ENCODE measurements at regions of chr7 and their contacts with region 1.

Region 1: DNA sequence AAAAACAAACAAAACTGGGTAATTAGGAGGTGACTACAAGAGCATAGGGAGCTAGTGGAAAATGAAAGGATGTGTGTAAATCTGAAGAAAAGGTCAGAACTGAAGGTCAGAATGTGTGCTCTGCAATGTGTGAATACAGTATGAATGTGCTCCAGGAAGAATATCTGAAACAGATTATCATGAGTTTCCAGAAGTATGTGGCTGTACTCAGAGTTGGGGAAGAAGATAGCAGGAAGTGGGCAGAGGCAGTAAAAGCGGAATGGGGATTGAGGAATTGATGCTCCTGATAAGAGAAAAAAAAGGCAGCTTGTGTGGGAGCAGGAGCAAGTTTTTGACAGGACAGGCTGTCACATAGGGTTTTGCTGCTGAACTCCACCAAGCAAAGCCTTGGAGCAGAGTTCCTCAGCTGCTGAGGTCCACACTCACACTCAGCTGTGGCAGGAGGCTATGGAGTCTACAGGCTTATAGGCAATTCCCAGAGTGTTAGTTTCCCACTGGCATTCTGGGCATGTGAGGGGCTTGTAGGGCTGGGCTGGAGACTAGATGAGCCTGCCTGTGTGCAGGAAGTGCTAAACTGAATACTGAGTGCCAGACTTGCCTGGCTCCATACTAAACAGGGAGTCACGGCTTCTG is 22.9 kb downstream of the H2AZ2 start:
- DNase-seq: no peak
- H3K4me3 ChIP-seq: no peak overlapping the region
- H3K27ac ChIP-seq: no peak overlapping the region
- H3K4me1 ChIP-seq: no peaks in the 10 kb centered on the region
- H3K27me3 ChIP-seq: no peaks in the 10 kb centered on the region
- CTCF ChIP-seq: no peak

Region 2: DNA sequence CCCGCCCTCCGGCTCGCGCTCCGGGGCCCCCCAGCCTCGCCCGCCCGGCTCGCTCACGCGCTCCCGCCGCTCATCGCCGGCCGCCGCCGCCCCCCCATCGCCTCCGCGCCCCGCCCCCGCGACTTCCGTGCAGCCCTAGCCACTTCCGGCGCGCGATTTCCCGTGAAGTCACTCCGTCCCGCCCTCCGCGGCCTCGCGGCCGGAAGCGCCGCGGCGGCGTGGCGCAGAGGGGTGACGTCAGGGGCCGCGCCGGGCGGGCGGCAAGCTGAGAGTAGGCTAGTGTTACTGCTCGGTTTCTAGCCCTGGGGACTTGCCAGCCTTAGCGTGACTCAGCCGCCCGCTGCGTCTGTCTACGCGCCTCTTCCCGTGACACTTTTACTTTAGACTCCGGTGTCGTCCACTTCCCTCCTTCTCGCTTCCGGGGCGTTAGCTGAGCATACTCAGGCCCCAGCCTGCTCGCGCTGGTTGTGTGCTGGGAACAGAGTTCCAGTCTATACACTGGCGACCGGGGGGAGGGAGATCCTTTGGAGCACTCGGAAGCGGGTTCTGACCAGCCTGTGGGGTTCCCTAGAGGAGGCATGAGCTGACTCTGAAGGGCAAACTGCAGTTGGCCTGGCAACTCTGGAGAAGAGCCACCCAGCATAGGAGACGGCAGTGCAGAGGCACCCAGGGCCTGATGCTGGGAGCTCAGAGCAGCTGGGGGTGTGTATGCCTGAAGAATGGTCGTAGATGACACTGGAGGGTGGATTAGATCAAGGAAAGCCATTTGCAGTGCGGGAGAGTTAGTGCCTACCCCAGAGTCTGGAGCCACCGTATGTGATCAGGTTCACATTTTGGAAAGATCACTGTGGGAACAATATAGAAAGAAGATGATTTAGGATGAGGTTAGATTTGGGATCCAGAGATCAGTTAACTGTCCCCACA is 60.6 kb after region 1 on chr7 and contains the start of gene PURB:
- CTCF ChIA-PET with region 1: no interaction called
- dilution Hi-C with region 1: loop called (anchors 5 kb)
- in situ Hi-C with region 1: no loop called
- intact Hi-C with region 1: no loop called
- DNase-seq: peak; percentile 99
- H3K4me3 ChIP-seq: peak within 1 kb of the TSS; percentile 69 to 94 (median 84)
- H3K27ac ChIP-seq: peak within 1 kb of the TSS; percentile 97
- H3K4me1 ChIP-seq: peaks cover 30% of the 10 kb centered on the region
- H3K27me3 ChIP-seq: no peaks in the 10 kb centered on the region
- CTCF ChIP-seq: no peak
- total RNA-seq, gene PURB: 30.2 to 32.8 TPM

Measured in mammary epithelial cell (primary cell).